Activated CD8-positive, alpha-beta T cell treated with anti-CD3 and anti-CD28 coated beads, Interleukin-2, amount 10 ng/mL, durations not matched to agents 7 days and 5 days (primary cell): ENCODE measurements at regions of chr10 and their contacts with region 1.

Region 1: DNA sequence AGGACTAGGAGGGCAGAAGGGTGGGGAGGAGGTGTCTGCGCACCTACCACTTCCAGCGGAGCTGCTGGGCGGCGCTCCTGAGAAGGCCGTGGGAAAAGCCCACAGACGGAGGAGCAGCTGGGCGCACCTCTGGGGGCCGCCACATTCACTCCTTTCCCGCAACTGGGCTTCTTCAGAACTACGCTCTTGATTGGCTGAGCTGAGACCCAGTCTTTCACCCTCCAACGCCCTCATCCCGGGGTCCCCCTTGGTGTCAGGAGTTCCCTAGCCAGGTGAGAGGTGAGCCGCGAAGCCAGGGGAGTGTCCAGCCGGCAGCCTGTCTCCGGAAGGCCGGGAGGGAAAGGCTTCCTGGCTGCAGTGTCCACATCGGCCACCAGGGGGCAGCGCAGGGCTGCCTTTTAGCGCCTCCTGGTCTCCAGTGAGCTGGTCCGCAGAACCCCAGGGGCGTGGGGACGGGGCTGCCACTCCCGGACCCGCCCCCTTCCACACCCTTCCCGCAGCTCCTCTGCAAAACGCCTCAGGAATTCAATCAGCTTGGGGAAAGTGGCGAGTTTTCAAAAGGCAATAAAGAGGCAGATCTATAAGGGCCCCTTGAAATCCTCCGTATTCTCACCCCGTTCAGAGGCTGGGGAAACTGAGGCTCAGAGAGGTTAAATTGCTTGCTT is 98.8 kb downstream of the CHST15 start:
- DNase-seq: peak; percentile 81
- ATAC-seq: peak; percentile 84
- H3K4me3 Mint-ChIP-seq: no peak overlapping the region
- H3K27ac Mint-ChIP-seq: no peak overlapping the region
- H3K4me1 Mint-ChIP-seq: peaks cover 8% of the 10 kb centered on the region
- H3K27me3 Mint-ChIP-seq: peaks cover 42% of the 10 kb centered on the region

Region 2: GRCh38 chr10:124083740-124084397 is 89.3 kb after region 1 on chr10:
- CTCF ChIA-PET with region 1: no interaction called
- POLR2A ChIA-PET with region 1: no interaction called
- DNase-seq: no peak
- ATAC-seq: no peak
- H3K4me3 Mint-ChIP-seq: no peak overlapping the region
- H3K27ac Mint-ChIP-seq: no peak overlapping the region
- H3K4me1 Mint-ChIP-seq: no peaks in the 10 kb centered on the region
- H3K27me3 Mint-ChIP-seq: peaks cover 6% of the 10 kb centered on the region

Region 3: DNA sequence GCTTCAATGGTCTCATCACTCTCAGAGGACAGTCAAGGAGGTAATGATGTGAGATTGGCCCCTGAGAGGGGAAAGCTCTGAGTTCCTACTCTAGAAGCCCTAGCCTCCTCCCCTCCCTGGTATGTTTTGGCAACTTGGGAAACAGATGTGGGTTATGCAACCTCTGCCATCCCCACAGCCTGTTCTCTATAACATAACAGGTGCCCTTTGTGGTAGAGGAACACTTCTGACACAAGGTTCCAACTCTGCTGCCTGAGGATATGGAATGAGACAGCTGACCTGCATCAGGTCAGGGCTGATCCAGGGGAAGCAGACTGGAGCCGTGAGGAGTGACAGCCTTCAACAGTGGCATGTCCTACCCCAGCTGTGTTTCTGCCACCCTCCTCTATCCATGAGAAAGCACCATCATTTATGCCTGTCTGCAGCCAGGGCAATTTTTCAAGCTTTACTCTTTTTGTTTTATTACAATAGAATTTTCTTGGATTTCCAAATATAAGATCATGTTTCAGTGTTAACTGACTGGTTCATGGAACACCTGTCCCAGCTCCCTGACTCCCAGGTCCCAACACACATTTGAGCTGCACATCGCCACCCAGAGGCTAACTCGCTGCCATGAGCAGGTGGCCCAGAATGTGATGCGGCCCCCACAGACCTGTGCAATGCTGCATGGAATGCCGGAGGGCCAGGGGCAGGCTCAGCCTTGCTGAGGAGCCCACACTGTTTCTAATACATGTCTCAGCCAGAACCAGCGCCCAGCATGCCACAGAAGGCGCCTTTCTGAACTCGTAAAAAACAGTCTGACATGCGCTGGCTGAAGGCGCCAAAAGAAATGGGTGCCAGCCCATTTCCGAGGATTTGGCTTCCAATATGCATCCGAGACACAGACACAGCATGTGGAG is 223.6 kb after region 1 on chr10:
- CTCF ChIA-PET with region 1: interaction called, 11 read pairs
- POLR2A ChIA-PET with region 1: no interaction called
- DNase-seq: no peak
- ATAC-seq: no peak
- H3K4me3 Mint-ChIP-seq: no peak overlapping the region
- H3K27ac Mint-ChIP-seq: no peak overlapping the region
- H3K4me1 Mint-ChIP-seq: peaks cover 22% of the 10 kb centered on the region
- H3K27me3 Mint-ChIP-seq: peaks cover 3% of the 10 kb centered on the region

Region 4: DNA sequence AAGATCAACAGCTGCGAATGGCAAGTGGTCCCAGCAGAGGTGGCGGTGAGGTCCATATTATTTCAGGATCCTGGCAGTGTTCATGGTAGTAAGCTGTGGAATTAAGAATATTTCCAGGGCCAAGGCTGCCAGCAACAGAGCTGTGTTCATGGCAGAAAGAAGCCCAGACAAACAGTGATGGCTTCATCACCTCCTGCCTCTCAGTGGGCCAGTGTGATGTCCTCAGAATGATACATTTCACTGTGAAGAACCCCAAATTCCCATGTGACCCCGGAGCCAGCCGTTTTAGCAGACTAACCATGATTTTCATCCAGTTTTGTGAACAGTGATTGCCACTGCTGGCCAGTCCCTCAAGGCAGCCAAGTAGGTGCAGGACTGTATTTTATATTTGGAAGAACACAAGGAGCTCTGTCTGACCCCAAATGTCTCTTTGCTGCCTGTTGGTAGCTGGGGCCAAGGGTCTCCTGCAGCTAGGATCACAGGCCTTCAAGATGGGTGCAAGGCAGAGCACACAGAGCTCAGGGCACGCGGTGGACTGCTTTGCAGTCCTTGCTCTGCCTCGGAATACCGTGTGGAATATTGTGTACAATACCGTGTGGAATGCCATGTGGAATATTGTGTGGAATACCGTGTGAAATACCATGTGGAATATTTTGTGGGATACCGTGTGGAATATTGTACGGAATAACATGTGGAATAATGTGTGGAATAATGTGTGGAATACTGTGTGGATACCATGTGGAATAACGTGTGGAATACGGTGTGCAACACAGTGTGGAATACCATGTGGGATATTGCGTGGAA is 231.1 kb after region 1 on chr10:
- CTCF ChIA-PET with region 1: interaction called, 10 read pairs
- POLR2A ChIA-PET with region 1: no interaction called
- DNase-seq: peak; percentile 68
- ATAC-seq: peak; percentile 74
- H3K4me3 Mint-ChIP-seq: peak overlapping the region; percentile 37
- H3K27ac Mint-ChIP-seq: peak overlapping the region; percentile 68
- H3K4me1 Mint-ChIP-seq: peaks cover 17% of the 10 kb centered on the region
- H3K27me3 Mint-ChIP-seq: no peaks in the 10 kb centered on the region

Region 5: DNA sequence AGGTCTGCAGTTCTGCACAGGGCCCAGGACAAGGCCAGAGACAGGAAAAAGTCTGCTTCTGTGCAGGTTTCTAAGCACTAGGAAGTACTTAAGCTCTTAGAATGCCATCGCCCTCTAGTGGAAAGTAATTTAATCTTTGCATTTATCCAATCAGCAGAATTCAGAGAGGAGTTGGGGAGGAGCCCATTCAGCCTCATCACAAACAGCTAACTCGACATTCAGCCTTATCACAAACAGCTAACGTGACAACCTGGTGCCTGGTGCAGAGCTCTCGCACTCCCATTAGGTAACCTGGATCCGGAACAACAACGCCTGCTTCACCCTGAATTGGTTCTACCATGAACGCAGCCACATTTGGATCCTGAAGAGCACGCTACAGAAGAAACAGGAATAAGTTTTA is 409.0 kb after region 1 on chr10:
- CTCF ChIA-PET with region 1: interaction called, 17 read pairs
- POLR2A ChIA-PET with region 1: no interaction called
- DNase-seq: peak; percentile 58
- ATAC-seq: peak; percentile 97
- H3K4me3 Mint-ChIP-seq: no peak overlapping the region
- H3K27ac Mint-ChIP-seq: peak overlapping the region; percentile 70
- H3K4me1 Mint-ChIP-seq: peaks cover 10% of the 10 kb centered on the region
- H3K27me3 Mint-ChIP-seq: no peaks in the 10 kb centered on the region